Posterior cingulate gyrus (tissue), 11 donors: ENCODE measurements at regions of chr15 and their contacts with region 1.

Region 1: DNA sequence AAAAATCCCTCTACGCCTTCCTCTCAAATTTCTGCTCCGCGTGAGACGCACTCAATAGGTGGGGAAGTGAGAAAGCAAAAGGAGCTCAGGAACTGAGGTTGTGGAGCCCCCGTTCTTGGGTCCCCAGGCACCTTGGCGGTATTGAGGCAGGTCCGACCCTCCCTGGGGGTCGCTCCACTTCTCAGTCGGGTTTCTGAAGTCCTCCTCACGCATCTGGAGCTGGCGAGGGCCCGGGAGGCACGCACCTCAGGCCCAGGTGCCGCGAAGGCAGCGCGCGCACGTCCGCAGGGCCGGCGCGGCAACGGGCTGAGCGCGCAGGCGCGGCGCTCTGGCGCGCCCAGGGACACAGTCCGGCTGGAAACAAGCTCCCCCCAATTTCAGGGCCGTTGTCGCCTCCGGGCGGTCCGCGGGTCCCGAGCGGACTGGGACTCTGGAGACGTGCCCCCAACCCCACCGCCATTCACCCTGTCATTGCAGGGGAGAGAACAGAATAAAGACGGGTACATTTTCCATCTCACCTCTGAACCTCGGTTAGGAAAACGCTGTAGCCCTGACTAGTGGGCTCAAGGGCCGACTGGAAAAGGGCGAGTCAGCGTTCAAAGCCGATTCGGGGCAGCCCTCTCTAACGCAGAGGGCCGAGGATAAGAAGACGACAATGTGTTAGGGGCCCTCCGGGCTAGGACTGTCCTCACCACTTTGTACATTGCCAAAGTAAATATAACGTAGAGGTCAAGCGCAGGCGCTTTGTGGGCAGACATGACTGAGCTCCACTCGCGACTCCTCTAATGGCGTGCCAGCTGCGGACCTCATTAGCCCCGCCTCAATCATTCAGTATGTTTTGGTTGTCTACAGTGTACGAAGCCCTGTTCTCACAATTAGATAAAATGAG is at the start of gene ZNF770:
- DNase-seq: peak; percentile 64 to 96 (median 78)

Region 2: DNA sequence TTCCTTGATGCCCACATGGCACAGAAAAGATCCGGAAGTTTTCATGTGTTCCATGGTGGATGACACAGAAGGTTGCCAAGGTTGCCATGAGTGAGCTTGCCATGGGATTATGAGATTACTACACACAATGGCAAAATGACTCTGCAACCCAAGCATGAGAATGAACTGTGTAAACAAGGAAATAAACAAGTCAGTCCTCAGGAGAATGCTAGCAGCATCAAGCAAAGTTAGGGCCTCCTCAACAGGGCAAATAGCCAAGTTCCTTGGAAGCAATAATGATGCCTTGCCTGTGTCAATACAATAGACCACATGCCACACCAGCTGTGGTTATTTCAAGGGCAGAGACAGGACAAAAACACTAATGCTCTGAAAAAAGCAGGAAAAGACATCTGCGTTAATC is 60.5 kb before region 1 on chr15:
- intact Hi-C with region 1: no loop called
- DNase-seq: no peak

Region 3: GRCh38 chr15:34969340-34970097 is 18.7 kb before region 1 on chr15 and contains the start of gene AQR:
- intact Hi-C with region 1: loop called (anchors 1 kb)
- DNase-seq: peak; percentile 92 to 100 (median 98)